MCF 10A (cell line): ENCODE measurements at regions of chr3 and their contacts with region 1.

Region 1: DNA sequence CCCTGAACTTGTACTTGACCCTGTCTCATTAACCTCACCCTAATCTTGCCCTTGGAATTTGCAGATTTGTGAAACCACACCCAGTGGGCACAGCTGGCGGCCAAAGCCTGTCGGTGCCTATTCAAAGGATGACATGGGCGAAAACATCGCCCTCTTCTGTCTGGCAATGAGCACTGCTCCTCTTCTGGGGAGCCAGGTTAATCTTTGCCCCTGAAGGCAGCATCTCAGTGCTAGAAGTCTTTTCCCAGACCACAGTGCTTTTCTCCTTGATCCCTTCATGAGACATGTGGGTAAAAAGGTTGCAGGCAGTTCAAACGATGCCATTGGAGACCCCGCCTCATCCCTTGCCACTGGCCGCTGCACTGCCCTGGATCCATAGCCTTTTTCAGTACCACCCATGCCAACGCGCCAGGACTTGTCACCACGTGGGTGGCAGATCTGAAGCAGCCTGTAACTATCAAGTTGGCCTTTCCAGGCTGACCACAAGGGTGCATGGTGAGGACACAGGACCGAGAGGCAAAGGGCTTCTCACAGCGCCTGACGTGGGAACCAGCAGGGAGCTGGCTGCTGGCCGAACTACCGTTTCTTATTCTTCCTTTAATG is 6.5 kb upstream of the DNASE1L3 start:
- DNase-seq: peak; percentile 94
- H3K4me3 Mint-ChIP-seq: peak overlapping the region; percentile 28
- H3K27ac Mint-ChIP-seq: peak overlapping the region; percentile 10
- H3K4me1 Mint-ChIP-seq: peaks cover 25% of the 10 kb centered on the region
- H3K27me3 Mint-ChIP-seq: no peaks in the 10 kb centered on the region
- CTCF ChIP-seq: peak; percentile 70

Region 2: GRCh38 chr3:57903124-57903890 is 314.0 kb before region 1 on chr3:
- CTCF ChIA-PET with region 1: no interaction called
- POLR2A ChIA-PET with region 1: no interaction called
- intact Hi-C with region 1: no loop called
- DNase-seq: no peak
- H3K4me3 Mint-ChIP-seq: no peak overlapping the region
- H3K27ac Mint-ChIP-seq: no peak overlapping the region
- H3K4me1 Mint-ChIP-seq: no peaks in the 10 kb centered on the region
- H3K27me3 Mint-ChIP-seq: no peaks in the 10 kb centered on the region
- CTCF ChIP-seq: no peak

Region 3: GRCh38 chr3:58177747-58178527 is 39.4 kb before region 1 on chr3:
- CTCF ChIA-PET with region 1: interaction called, 29 read pairs
- POLR2A ChIA-PET with region 1: interaction called, 3 read pairs
- intact Hi-C with region 1: no loop called
- DNase-seq: peak; percentile 78
- H3K4me3 Mint-ChIP-seq: peak overlapping the region; percentile 51
- H3K27ac Mint-ChIP-seq: no peak overlapping the region
- H3K4me1 Mint-ChIP-seq: peaks cover 24% of the 10 kb centered on the region
- H3K27me3 Mint-ChIP-seq: no peaks in the 10 kb centered on the region
- CTCF ChIP-seq: peak; percentile 82

Region 4: GRCh38 chr3:58200846-58201355 is 16.4 kb before region 1 on chr3:
- CTCF ChIA-PET with region 1: interaction called, 7 read pairs
- POLR2A ChIA-PET with region 1: interaction called, 10 read pairs
- intact Hi-C with region 1: no loop called
- DNase-seq: no peak
- H3K4me3 Mint-ChIP-seq: no peak overlapping the region
- H3K27ac Mint-ChIP-seq: no peak overlapping the region
- H3K4me1 Mint-ChIP-seq: no peaks in the 10 kb centered on the region
- H3K27me3 Mint-ChIP-seq: peaks cover 10% of the 10 kb centered on the region
- CTCF ChIP-seq: no peak

Region 5: GRCh38 chr3:58231666-58232065 is 14.4 kb after region 1 on chr3:
- CTCF ChIA-PET with region 1: interaction called, 33 read pairs
- POLR2A ChIA-PET with region 1: interaction called, 20 read pairs
- intact Hi-C with region 1: no loop called
- DNase-seq: no peak
- H3K4me3 Mint-ChIP-seq: no peak overlapping the region
- H3K27ac Mint-ChIP-seq: no peak overlapping the region
- H3K4me1 Mint-ChIP-seq: peaks cover 7% of the 10 kb centered on the region
- H3K27me3 Mint-ChIP-seq: peaks cover 47% of the 10 kb centered on the region
- CTCF ChIP-seq: no peak

Region 6: GRCh38 chr3:58299839-58300516 is 82.7 kb after region 1 on chr3:
- CTCF ChIA-PET with region 1: interaction called, 58 read pairs
- POLR2A ChIA-PET with region 1: interaction called, 23 read pairs
- intact Hi-C with region 1: loop called (anchors 1 kb)
- DNase-seq: peak; percentile 38
- H3K4me3 Mint-ChIP-seq: no peak overlapping the region
- H3K27ac Mint-ChIP-seq: no peak overlapping the region
- H3K4me1 Mint-ChIP-seq: no peaks in the 10 kb centered on the region
- H3K27me3 Mint-ChIP-seq: peaks cover 11% of the 10 kb centered on the region
- CTCF ChIP-seq: peak; percentile 54